CD4-positive, alpha-beta memory T cell (primary cell): ENCODE measurements at regions of chr14 and their contacts with region 1.

Region 1: DNA sequence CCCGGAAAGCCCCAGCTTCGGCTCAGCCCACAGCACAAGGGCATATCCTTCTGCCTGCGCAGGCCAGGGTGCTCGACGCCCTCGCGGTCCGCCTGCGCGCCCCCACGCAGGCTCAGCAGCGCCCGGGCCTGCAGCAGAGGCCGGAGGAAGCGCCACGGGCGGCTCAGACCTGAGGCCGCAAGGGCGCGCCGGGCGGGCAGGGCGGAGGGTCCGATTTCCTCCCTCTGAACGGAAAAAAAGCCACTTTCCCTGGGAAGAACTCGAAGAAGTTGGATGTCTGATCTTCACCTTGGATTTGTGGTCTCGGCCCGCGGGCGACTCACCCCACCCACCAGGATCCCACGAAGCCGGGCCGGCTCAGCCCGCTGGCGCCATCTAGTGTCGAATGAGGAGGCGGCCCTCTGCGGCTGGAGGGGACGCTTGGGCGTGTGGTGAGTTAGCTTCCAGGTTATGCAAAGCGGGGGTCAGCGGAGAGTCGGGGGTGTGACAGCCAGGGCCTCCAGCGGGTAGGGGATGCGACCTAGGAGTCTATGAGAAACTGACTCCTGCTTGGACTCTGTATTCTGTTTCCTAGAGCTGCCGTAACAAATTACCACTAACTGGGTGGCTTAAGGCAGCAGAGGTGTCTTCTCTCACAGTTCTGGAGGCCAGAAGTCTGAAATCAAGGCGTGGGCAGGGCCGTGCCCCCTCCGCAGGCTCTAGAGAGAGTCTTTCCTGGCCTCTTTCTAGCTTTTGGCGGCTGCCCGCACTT is 40.0 kb upstream of the SRSF5 start:
- DNase-seq: peak; percentile 71 to 84 (median 79)
- H3K4me3 ChIP-seq: peak overlapping the region; percentile 29 to 54
- H3K4me3 Mint-ChIP-seq: peak overlapping the region; percentile 65 to 82 (median 74)
- H3K27ac ChIP-seq: peak overlapping the region; percentile 30
- H3K27ac Mint-ChIP-seq: peak overlapping the region; percentile 62 to 86 (median 71)
- H3K4me1 ChIP-seq: peaks cover 19% of the 10 kb centered on the region
- H3K4me1 Mint-ChIP-seq: peaks cover 11 to 39% (median 25%) of the 10 kb centered on the region in 4 donors
- H3K27me3 ChIP-seq: no peaks in the 10 kb centered on the region
- H3K27me3 Mint-ChIP-seq: no peaks in the 10 kb centered on the region

Region 2: DNA sequence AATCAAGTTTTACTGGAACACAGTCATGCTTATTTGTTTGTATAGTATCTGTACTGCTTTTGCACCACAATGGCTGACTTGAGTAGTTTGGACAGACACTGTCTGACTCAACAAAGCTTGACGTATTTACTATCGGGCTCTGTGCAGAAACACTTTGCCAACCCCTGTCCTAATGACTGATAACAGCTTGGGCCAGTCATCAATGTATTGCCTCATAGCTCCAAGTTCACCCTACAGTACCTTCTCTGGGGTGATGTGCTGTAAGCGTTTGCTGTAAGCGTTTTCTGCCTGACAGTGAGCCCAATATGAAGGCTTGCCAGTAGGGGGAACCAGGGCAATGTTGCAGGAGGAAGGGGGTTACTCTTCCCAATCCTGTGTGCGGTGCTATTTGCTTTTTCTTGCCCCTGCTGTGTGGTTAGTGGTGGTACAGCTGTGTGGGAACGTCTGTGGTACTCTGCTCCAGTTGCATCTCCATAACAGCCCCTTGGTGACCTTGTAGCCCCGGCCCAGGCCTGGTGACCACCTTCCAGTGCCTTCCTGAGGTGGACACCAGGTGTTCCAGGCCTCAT is 146.8 kb before region 1 on chr14:
- CTCF ChIA-PET with region 1: interaction called, 62 read pairs
- POLR2A ChIA-PET with region 1: no interaction called
- intact Hi-C with region 1: loop called (anchors 1 kb)
- DNase-seq: no peak
- H3K4me3 ChIP-seq: no peak overlapping the region
- H3K4me3 Mint-ChIP-seq: no peak overlapping the region
- H3K27ac ChIP-seq: no peak overlapping the region
- H3K27ac Mint-ChIP-seq: peak overlapping the region in 1 of 7 donors; percentile 66
- H3K4me1 ChIP-seq: no peaks in the 10 kb centered on the region
- H3K4me1 Mint-ChIP-seq: peaks cover 0 to 2% (median 0%) of the 10 kb centered on the region in 4 donors
- H3K27me3 ChIP-seq: no peaks in the 10 kb centered on the region
- H3K27me3 Mint-ChIP-seq: peaks cover 12 to 13% of the 10 kb centered on the region in 2 donors

Region 3: DNA sequence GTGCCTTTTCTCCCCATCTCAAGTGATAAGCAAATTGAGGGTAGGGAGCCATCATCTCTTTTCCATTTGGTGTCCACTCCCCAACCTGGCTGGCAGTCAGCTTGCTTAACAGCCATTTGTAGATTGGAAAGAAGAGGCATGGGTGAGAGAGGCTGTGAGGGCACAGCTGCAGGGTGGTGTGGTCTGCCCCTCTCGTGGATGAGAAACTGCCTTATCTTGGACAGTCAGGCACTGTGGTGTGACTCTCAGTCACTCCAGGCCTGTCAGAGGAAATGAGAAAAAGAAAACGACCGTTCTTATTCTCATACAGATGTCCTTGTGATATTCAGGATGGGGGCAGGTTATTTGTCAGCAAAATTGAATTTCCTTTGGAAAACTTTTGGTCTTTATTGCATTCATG is 25.1 kb before region 1 on chr14:
- CTCF ChIA-PET with region 1: interaction called, 11 read pairs
- POLR2A ChIA-PET with region 1: no interaction called
- intact Hi-C with region 1: no loop called
- DNase-seq: no peak
- H3K4me3 ChIP-seq: no peak overlapping the region
- H3K4me3 Mint-ChIP-seq: no peak overlapping the region
- H3K27ac ChIP-seq: no peak overlapping the region
- H3K27ac Mint-ChIP-seq: peak overlapping the region in 2 of 7 donors; percentile 47 to 58
- H3K4me1 ChIP-seq: peaks cover 44% of the 10 kb centered on the region
- H3K4me1 Mint-ChIP-seq: peaks cover 47 to 88% (median 56%) of the 10 kb centered on the region in 4 donors
- H3K27me3 ChIP-seq: no peaks in the 10 kb centered on the region
- H3K27me3 Mint-ChIP-seq: no peaks in the 10 kb centered on the region

Region 4: DNA sequence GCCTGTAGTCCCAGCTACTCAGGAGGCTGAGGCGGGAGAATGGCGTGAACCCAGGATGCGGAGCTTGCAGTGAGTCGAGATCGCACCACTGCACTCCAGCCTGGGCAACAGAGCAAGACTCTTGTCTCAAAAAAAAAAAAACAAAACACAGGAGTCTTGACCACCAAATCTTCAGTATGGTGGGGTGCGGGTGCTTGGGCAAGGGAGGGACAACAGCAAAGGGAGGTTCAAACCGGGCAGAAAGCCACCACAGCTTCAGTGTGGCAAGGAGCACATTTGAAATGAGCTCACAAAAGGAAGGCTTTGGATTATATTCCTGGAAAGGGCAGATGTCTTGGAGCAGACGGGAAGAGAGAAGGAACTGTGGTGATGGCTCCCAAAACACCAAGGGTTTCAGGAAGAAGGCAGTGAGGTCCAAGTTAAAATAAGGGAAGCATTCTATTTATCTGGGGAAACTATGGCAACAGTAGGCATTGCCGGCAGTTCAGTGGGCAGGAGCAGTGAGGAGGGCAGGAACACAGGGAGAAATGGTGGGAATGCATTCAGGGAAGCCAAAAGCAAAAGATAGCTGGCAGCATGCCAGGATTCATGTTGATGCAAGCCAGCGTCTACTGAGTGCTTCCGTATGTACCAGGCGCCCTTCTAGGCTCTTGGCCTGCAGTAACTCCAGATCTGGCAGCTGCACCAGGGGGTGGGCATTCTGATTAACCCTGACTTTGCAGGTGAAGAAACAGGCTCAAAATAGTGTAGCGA is 11.0 kb before region 1 on chr14:
- CTCF ChIA-PET with region 1: interaction called, 15 read pairs
- POLR2A ChIA-PET with region 1: no interaction called
- intact Hi-C with region 1: no loop called
- DNase-seq: peak in 1 of 5 donors; percentile 42
- H3K4me3 ChIP-seq: no peak overlapping the region
- H3K4me3 Mint-ChIP-seq: peak overlapping the region in 5 of 8 donors; percentile 5 to 51 (median 21)
- H3K27ac ChIP-seq: no peak overlapping the region
- H3K27ac Mint-ChIP-seq: peak overlapping the region; percentile 38 to 85 (median 77)
- H3K4me1 ChIP-seq: peaks cover 33% of the 10 kb centered on the region
- H3K4me1 Mint-ChIP-seq: peaks cover 27 to 62% (median 47%) of the 10 kb centered on the region in 4 donors
- H3K27me3 ChIP-seq: no peaks in the 10 kb centered on the region
- H3K27me3 Mint-ChIP-seq: no peaks in the 10 kb centered on the region

Region 5: GRCh38 chr14:69749956-69750355 is 23.0 kb after region 1 on chr14:
- CTCF ChIA-PET with region 1: interaction called, 11 read pairs
- POLR2A ChIA-PET with region 1: no interaction called
- intact Hi-C with region 1: no loop called
- DNase-seq: no peak
- H3K4me3 ChIP-seq: no peak overlapping the region
- H3K4me3 Mint-ChIP-seq: no peak overlapping the region
- H3K27ac ChIP-seq: no peak overlapping the region
- H3K27ac Mint-ChIP-seq: peak overlapping the region in 1 of 7 donors; percentile 2
- H3K4me1 ChIP-seq: peaks cover 5% of the 10 kb centered on the region
- H3K4me1 Mint-ChIP-seq: peaks cover 5 to 8% (median 6%) of the 10 kb centered on the region in 4 donors
- H3K27me3 ChIP-seq: no peaks in the 10 kb centered on the region
- H3K27me3 Mint-ChIP-seq: no peaks in the 10 kb centered on the region

Region 6: DNA sequence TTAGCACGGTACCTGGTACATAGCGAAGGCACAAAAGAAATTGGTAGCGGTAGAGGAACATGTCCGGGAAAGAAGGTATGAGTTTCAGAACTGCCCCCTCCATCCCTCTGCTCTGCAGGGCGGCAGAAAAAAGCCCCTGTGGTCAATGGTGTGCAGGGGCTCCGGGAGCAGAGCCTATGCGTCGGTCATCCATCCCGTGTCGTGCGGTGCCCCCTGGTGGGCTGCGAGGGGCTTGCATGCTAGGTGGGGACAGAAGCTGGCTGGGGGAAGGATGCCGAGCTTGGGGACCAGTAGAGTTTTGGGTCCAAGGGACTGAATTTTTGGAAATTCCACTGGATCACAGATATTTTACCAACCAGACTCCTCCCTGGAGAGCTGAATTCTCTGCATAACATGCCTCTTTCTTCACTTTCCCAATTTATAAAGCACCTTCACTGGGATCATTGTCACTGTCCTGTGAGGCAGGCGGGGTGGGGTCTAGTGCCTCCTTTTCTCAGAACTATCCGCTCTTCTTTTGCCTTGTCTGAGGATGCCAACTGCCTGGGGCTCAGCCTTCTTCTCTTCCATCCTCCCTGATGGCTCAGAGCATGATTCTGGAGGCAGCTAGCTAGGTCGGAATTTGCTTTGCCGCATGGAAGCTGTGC is 301.0 kb after region 1 on chr14:
- CTCF ChIA-PET with region 1: no interaction called
- POLR2A ChIA-PET with region 1: no interaction called
- intact Hi-C with region 1: loop called (anchors 10 kb)
- DNase-seq: peak in 4 of 5 donors; percentile 14 to 47 (median 22)
- H3K4me3 ChIP-seq: no peak overlapping the region
- H3K4me3 Mint-ChIP-seq: no peak overlapping the region
- H3K27ac ChIP-seq: no peak overlapping the region
- H3K27ac Mint-ChIP-seq: no peak overlapping the region
- H3K4me1 ChIP-seq: no peaks in the 10 kb centered on the region
- H3K4me1 Mint-ChIP-seq: peaks cover 0 to 4% (median under 1%) of the 10 kb centered on the region in 4 donors
- H3K27me3 ChIP-seq: no peaks in the 10 kb centered on the region
- H3K27me3 Mint-ChIP-seq: peaks cover 2 to 15% of the 10 kb centered on the region in 2 donors